ENCODE measurements at regions of chr1 and their contacts with region 1.

Region 1: GRCh38 chr1:119631433-119632102 is 16.5 kb downstream of the ZNF697 start:
- DNase-seq: no peak
- H3K4me3 Mint-ChIP-seq: no peak overlapping the region
- H3K27ac Mint-ChIP-seq: no peak overlapping the region
- H3K4me1 Mint-ChIP-seq: peaks cover 4% of the 10 kb centered on the region
- H3K27me3 Mint-ChIP-seq: peaks cover 64% of the 10 kb centered on the region

Region 2: GRCh38 chr1:119448127-119448511 is 183.4 kb before region 1 on chr1:
- intact Hi-C with region 1: no loop called
- DNase-seq: no peak
- H3K4me3 Mint-ChIP-seq: no peak overlapping the region
- H3K27ac Mint-ChIP-seq: no peak overlapping the region
- H3K4me1 Mint-ChIP-seq: no peaks in the 10 kb centered on the region
- H3K27me3 Mint-ChIP-seq: no peaks in the 10 kb centered on the region

Region 3: DNA sequence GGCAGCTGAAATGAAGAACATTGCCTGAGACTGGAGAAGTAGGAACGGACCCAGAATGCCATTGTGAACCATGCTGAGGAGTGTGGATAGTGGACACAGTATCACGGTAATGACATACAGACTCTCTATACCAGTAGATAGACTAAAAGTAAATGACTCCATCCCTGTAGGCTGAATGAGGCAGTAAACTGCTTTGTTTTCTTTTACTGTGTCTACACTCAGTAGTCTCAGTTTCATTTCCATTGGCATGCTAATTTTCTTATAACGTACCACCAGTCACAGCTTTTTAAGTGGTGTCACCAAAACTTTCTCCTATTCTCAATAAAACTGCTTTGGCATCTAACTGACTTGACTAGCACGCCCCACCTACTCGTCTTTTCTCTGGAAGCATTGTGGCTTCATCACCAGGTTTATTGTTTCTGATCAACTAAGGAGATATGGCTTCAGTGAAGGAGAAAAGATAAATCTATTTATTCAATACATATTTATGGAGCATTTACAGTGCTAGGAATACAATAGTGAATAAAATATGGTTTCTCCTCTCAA is 24.9 kb after region 1 on chr1:
- intact Hi-C with region 1: loop called (anchors 2 kb)
- DNase-seq: no peak
- H3K4me3 Mint-ChIP-seq: no peak overlapping the region
- H3K27ac Mint-ChIP-seq: no peak overlapping the region
- H3K4me1 Mint-ChIP-seq: peaks cover 8% of the 10 kb centered on the region
- H3K27me3 Mint-ChIP-seq: peaks cover 47% of the 10 kb centered on the region

Region 4: DNA sequence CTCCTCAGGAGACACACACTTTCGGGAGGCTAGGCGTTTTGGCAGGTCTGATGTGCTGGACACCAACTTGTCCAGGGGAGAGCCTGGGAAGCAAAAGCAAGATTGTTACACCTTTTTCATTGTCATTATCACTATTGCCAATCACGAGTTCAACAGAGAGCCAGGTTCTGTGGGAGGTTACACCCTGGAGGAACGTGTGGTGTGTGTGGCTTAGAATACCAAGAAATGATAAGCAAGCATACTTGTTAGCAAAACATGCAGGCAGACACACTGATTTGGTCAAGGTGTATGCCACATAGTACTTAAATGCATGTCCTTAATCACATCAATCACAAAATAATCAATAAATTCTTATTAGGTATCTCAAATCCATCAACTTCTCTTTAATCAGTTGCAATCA is 121.0 kb after region 1 on chr1:
- intact Hi-C with region 1: no loop called
- DNase-seq: no peak
- H3K4me3 Mint-ChIP-seq: no peak overlapping the region
- H3K27ac Mint-ChIP-seq: no peak overlapping the region
- H3K4me1 Mint-ChIP-seq: peaks cover 10% of the 10 kb centered on the region
- H3K27me3 Mint-ChIP-seq: peaks cover 32% of the 10 kb centered on the region